SK-N-SH (cell line): ENCODE measurements at regions of chr22 and their contacts with region 1.

Region 1: GRCh38 chr22:46758867-46759290 is 3.6 kb upstream of the TBC1D22A start:
- DNase-seq: peak; percentile 50
- H3K4me3 ChIP-seq: no peak overlapping the region
- H3K27ac ChIP-seq: no peak overlapping the region
- H3K4me1 ChIP-seq: peaks cover 14 to 23% of the 10 kb centered on the region in 2 experiments; a peak in 3 of 4 replicates
- H3K27me3 ChIP-seq: no peaks in the 10 kb centered on the region
- CTCF ChIP-seq: peak; percentile 75
- EP300 ChIP-seq: no peak
- RAD21 ChIP-seq: peak; percentile 61

Region 2: DNA sequence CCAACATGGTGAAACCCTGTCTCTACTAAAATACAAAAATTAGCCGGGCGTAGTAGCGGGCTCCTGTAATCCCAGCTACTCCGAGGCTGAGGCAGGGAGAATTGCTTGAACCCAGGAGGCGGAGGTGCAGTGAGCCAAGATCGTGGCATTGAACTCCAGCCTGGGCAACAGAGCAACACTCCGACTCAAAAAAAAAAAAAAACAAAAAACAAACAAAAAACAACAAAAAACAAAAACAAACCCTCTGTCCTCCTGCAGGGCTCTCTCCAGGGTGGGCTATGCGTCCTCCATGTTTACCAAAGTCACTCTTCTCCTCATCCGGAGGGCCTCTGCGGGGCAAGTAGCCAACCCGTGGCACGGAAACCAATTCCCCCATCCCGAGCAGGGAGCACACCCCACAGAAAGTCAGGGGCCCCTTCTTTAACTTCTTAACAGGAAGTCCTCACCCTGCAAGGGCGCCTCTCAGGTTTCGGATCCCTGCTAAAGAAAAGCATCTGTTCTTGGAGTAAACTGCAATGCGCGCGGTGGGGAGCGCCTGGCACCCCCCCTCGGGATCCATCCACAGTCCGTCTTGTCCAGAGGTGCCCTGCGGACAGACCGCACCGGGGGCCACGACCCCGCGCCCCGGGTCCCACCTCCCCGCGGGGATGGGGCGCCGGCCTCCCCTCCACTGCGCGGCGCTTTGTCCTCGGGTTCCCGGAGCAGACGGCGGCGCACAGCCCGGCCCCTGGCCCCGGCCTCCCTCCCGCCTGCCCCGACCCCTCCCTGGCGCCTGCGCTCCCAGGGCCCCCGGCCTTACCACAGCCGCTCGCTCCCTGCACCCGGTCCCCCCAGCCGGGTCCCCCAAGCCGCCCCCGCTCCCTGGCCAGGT is 21.5 kb before region 1 on chr22:
- CTCF ChIA-PET with region 1: interaction called, 33 read pairs
- POLR2A ChIA-PET with region 1: interaction called, 7 read pairs
- DNase-seq: no peak
- H3K4me3 ChIP-seq: peak overlapping the region; percentile 67 to 96
- H3K27ac ChIP-seq: peak overlapping the region; percentile 42 to 90; a peak in 3 of 4 replicates
- H3K4me1 ChIP-seq: peaks cover 22 to 66% of the 10 kb centered on the region in 2 experiments
- H3K27me3 ChIP-seq: no peaks in the 10 kb centered on the region
- CTCF ChIP-seq: no peak
- EP300 ChIP-seq: no peak
- RAD21 ChIP-seq: no peak

Region 3: DNA sequence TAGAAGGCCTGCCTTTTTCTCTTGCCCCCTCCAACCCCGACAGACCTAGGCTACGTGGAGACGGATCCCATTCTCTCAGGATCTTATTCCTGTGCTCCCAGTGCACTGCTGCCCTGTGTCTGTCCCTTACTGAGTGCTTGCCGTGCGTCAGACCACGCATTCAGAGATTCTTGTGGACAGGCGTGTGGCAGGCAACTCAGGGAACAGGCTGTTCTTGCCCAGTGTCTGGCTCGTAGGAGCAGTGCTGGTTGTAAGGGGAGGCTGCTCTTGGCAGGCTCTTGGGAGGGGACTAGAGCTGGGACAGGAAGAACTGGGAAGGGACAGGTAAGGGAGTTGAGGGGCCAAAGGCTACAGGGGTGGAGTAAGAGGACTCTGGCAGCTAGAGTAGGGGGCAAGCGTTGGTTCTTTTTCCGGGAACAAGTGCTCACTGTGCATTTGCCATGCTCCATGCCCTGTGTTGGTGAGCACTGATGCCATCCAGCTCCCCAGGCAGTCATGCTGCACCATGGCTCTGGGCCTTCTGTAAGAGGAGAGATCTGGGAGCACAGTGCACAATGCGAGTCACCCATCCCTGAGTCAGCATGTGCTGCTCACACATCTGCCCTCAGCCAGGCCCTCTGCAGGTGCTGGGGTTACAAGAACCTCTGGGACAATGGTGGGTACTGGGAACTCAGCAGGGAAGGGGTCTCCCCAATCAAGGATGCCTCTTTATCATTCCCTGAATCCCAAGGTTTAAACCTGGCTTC is 122.7 kb after region 1 on chr22:
- CTCF ChIA-PET with region 1: no interaction called
- POLR2A ChIA-PET with region 1: no interaction called
- DNase-seq: no peak
- H3K4me3 ChIP-seq: no peak overlapping the region
- H3K27ac ChIP-seq: no peak overlapping the region
- H3K4me1 ChIP-seq: peaks cover 0 to 3% of the 10 kb centered on the region in 2 experiments; a peak in 1 of 4 replicates
- H3K27me3 ChIP-seq: no peaks in the 10 kb centered on the region
- CTCF ChIP-seq: no peak
- EP300 ChIP-seq: no peak
- RAD21 ChIP-seq: no peak